ENCODE measurements at regions of chr1 and their contacts with region 1.

Region 1: DNA sequence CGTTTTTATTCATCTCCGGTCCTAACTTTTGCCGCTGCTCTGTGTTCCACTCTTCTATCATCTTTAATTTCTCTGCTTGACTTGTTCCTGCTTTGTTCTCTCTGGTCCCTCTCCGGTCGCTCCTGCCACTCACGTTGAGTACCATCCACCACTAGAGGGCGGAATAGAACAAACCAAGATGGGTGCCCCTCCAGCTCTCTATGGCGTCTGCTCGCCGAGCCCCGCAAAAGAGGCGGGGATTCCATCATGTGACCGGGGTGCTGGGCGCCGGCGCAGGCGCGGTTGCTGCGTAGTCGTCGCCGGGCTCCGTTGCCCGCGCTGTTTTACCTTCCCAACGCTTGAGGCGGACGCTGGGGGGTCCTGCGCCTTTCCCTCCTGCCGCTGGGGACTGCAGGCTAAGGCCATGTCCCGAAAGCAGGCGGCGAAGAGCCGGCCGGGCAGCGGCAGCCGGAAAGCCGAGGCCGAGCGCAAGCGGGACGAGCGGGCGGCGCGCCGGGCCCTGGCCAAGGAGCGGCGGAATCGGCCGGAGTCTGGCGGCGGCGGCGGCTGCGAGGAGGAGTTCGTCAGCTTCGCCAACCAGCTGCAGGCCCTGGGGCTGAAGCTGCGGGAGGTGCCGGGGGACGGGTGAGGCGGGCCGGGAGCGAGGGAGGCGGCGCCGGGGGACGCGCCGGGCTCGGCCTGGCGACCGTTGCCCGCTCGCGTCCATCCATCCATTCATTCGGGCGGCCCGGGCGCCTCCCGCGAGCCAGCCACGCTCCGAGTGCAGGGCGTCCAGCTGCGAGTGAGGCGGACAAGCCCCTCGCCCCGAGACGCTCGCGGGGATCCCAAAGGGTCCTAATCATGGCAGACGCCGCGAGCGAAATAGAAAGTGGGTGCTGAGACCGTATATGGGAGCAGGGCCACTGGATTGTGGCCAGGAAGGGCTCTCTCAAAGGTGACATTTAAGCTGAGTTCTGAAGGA is at the start of gene OTUD3:
- DNase-seq: peak; percentile 98
- ATAC-seq: peak; percentile 96
- H3K4me3 ChIP-seq: peak within 1 kb of the TSS; percentile 68 to 84 (median 81)
- H3K4me3 Mint-ChIP-seq: peak within 1 kb of the TSS; percentile 83
- H3K27ac ChIP-seq: peak within 1 kb of the TSS; percentile 62 to 80
- H3K27ac Mint-ChIP-seq: peak within 1 kb of the TSS; percentile 68
- H3K4me1 ChIP-seq: peaks cover 12 to 14% of the 10 kb centered on the region in 2 donors
- H3K4me1 Mint-ChIP-seq: peaks cover 27% of the 10 kb centered on the region
- H3K27me3 ChIP-seq: peaks cover 0 to 10% (median 4%) of the 10 kb centered on the region in 4 experiments
- H3K27me3 Mint-ChIP-seq: peaks cover 3% of the 10 kb centered on the region
- CTCF ChIP-seq: peak; percentile 81
- total RNA-seq, gene OTUD3: 19.0 and 19.6 TPM in 2 replicates

Region 2: GRCh38 chr1:19799877-19800804 is 82.2 kb before region 1 on chr1 and contains the start of gene TMCO4:
- CTCF ChIA-PET with region 1: no interaction called
- POLR2A ChIA-PET with region 1: no interaction called
- intact Hi-C with region 1: loop called (anchors 2 kb)
- DNase-seq: peak; percentile 68
- ATAC-seq: peak; percentile 50
- H3K4me3 ChIP-seq: peak within 1 kb of the TSS; percentile 79 to 95 (median 84)
- H3K4me3 Mint-ChIP-seq: peak within 1 kb of the TSS; percentile 96
- H3K27ac ChIP-seq: peak within 1 kb of the TSS; percentile 63 to 87
- H3K27ac Mint-ChIP-seq: peak within 1 kb of the TSS; percentile 94
- H3K4me1 ChIP-seq: peaks cover 9 to 24% of the 10 kb centered on the region in 2 donors
- H3K4me1 Mint-ChIP-seq: peaks cover 21% of the 10 kb centered on the region
- H3K27me3 ChIP-seq: no peaks in the 10 kb centered on the region
- H3K27me3 Mint-ChIP-seq: peaks cover 10% of the 10 kb centered on the region
- CTCF ChIP-seq: no peak
- total RNA-seq, gene TMCO4: 30.4 and 31.3 TPM in 2 replicates

Region 3: DNA sequence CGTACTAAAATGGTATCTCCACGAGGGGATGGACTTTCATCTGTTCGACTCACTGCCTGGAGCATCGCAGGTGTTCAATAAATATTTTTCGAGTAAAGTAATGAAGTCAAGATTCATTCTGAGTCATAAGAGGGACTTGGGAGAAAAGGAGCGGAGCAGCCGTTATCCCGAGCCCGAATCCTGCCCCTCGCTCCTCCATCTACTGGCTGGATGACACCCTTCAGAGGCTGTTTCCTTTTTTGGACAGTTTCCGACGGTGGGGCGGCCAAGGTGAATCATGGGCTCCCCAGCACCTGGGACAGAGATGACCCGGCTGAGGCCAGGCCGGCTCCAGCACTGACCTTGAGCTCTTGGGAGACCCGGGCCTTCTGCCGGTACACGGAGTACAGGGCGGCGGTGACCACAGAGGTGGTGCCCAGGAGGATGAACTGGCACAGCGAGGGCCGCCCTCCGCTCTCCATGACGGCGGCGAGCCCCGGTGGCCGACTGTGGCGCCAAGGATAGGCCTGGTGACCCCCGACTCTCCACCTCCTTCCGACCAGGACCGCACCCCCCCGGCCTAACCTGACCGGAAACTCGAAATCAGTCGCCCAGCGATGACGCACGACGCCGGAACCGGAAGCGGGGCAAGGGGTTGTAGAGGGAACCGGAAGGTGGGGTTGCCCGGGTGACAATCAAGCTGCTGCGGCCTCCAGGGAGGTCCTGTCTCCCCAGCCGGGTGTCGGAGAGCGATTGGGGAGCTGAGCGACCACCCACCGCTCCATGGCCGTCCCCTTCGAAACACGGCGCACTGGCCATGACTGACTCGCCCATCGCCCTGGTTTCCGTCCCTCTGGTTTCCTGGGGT is 625.4 kb after region 1 on chr1 and contains the start of gene MUL1:
- CTCF ChIA-PET with region 1: no interaction called
- POLR2A ChIA-PET with region 1: interaction called, 3 read pairs
- intact Hi-C with region 1: loop called (anchors 1 kb)
- DNase-seq: peak; percentile 93
- ATAC-seq: peak; percentile 87
- H3K4me3 ChIP-seq: peak within 1 kb of the TSS; percentile 76 to 100 (median 86)
- H3K4me3 Mint-ChIP-seq: peak within 1 kb of the TSS; percentile 91
- H3K27ac ChIP-seq: peak within 1 kb of the TSS; percentile 93 to 96
- H3K27ac Mint-ChIP-seq: peak within 1 kb of the TSS; percentile 93
- H3K4me1 ChIP-seq: peaks cover 14 to 22% of the 10 kb centered on the region in 2 donors
- H3K4me1 Mint-ChIP-seq: peaks cover 22% of the 10 kb centered on the region
- H3K27me3 ChIP-seq: peaks cover 0 to 13% (median 1%) of the 10 kb centered on the region in 4 experiments
- H3K27me3 Mint-ChIP-seq: peaks cover 4% of the 10 kb centered on the region
- CTCF ChIP-seq: no peak
- total RNA-seq, gene MUL1: 23.9 and 24.6 TPM in 2 replicates

Region 4: GRCh38 chr1:21176586-21177555 is 1294.5 kb after region 1 on chr1 and contains the start of gene EIF4G3:
- CTCF ChIA-PET with region 1: no interaction called
- POLR2A ChIA-PET with region 1: no interaction called
- intact Hi-C with region 1: loop called (anchors 5 kb)
- DNase-seq: peak; percentile 99
- ATAC-seq: peak; percentile 93
- H3K4me3 ChIP-seq: peak within 1 kb of the TSS; percentile 76 to 96 (median 83)
- H3K4me3 Mint-ChIP-seq: peak within 1 kb of the TSS; percentile 97
- H3K27ac ChIP-seq: peak within 1 kb of the TSS; percentile 73 to 89
- H3K27ac Mint-ChIP-seq: peak within 1 kb of the TSS; percentile 96
- H3K4me1 ChIP-seq: peaks cover 16 to 23% of the 10 kb centered on the region in 2 donors
- H3K4me1 Mint-ChIP-seq: peaks cover 29% of the 10 kb centered on the region
- H3K27me3 ChIP-seq: no peaks in the 10 kb centered on the region
- H3K27me3 Mint-ChIP-seq: no peaks in the 10 kb centered on the region
- CTCF ChIP-seq: no peak
- total RNA-seq, gene EIF4G3: 76.0 and 80.9 TPM in 2 replicates

Measured in B cell (primary cell).